GM13976 (cell line): ENCODE measurements at regions of chr12 and their contacts with region 1.

Region 1: DNA sequence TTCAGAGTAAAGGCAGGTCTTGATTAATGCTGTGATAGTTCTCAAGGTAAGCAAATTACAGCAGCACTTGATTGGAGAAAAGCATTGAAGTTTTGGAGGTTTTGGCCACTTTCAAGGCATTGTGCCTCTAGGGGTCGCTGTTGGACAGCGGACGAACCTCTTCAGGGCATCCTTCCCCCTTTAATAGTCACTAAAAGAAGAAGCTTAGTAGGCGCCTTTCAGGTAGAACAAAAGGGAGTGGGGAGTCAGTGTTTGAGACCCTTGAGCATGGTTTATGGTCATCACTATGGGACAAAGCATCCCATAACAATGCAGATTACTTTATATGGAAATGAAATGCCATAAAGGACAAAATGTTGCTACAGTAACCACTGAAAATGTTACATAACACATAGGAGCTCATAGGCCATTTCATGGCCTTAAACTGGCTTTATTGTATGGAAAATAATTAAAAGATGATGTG is 199.5 kb upstream of the DCN start:
- DNase-seq: peak; percentile 16
- CTCF ChIP-seq: peak; percentile 65

Region 2: GRCh38 chr12:92396647-92397252 is 1014.6 kb after region 1 on chr12:
- in situ Hi-C with region 1: loop called (anchors 25 kb)
- DNase-seq: no peak
- CTCF ChIP-seq: no peak